Mucosa of descending colon (tissue), 3 donors: ENCODE measurements at regions of chr4 and their contacts with region 1.

Region 1: GRCh38 chr4:185395956-185396723 is 416 bp upstream of the LRP2BP start:
- DNase-seq: peak; percentile 98 to 100 (median 98)
- ATAC-seq: peak; percentile 93
- H3K4me3 ChIP-seq: peak overlapping the region; percentile 62
- H3K4me1 ChIP-seq: peaks cover 17% of the 10 kb centered on the region
- CTCF ChIP-seq: no peak

Region 2: GRCh38 chr4:185203486-185204237 is 192.5 kb before region 1 on chr4 and contains the start of gene CFAP97:
- intact Hi-C with region 1: loop called in 1 of 2 experiments (anchors 5 kb)
- DNase-seq: peak; percentile 89 to 94 (median 90)
- ATAC-seq: peak; percentile 94
- H3K4me3 ChIP-seq: peak within 1 kb of the TSS; percentile 61
- H3K4me1 ChIP-seq: peaks cover 11% of the 10 kb centered on the region
- CTCF ChIP-seq: no peak
- total RNA-seq, gene CFAP97: 12.4 to 44.3 (median 16.6) TPM